ENCODE measurements at regions of chr4 and their contacts with region 1.

Region 1: DNA sequence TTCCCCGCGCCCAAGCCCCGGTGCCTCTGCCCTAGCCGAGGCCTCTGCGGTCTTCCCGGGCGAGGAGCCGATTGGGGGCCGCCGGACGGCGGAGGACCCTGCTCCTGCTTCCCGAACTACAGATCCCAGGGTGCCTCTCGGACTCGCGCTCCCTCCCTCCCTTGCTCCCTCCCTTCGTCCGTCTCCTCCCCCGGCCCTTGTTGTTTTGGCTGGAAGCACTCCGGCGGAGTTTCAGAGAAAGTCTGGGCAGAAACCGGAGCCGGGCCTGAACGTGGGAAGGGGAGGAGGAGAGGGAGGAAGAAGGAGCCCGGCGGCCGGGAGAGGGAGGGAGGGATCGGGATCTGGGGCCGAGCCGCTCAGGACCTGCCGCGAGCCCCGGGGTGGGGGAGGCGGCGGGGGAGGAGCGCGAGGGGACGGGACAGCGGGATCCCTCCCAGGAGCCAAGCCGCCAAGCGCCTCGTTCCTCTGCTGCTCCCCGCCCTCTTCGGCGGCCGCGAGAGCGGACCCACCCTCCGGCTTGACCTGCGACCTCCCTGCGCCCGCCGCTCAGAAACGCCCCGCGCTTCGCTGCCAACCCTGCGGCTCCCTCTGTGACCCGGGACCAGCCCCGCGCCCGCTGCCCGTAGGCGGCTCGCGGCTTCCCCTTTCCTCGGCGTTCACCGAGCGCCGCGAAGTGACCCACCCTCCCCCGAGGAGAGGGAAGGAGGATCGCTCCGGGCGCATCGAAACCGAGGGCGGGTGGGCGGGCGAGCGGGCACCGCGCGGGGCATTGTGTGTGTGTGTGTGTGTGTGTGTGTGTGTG is 496 bp upstream of the GAB1 start:
- DNase-seq: peak; percentile 83
- H3K4me3 ChIP-seq: peak overlapping the region; percentile 68
- H3K27ac ChIP-seq: peak overlapping the region; percentile 89
- H3K27me3 ChIP-seq: no peaks in the 10 kb centered on the region
- CTCF ChIP-seq: no peak

Region 2: GRCh38 chr4:143396695-143397094 is 60.5 kb after region 1 on chr4:
- CTCF ChIA-PET with region 1: interaction called, 4 read pairs
- POLR2A ChIA-PET with region 1: interaction called, 11 read pairs
- DNase-seq: no peak
- H3K4me3 ChIP-seq: no peak overlapping the region
- H3K27ac ChIP-seq: peak overlapping the region; percentile 33
- H3K27me3 ChIP-seq: no peaks in the 10 kb centered on the region
- CTCF ChIP-seq: peak; percentile 39